Activated CD4-positive, alpha-beta memory T cell treated with anti-CD3 and anti-CD28 coated beads for 36 hours (primary cell): ENCODE measurements at regions of chr6 and their contacts with region 1.

Region 1: DNA sequence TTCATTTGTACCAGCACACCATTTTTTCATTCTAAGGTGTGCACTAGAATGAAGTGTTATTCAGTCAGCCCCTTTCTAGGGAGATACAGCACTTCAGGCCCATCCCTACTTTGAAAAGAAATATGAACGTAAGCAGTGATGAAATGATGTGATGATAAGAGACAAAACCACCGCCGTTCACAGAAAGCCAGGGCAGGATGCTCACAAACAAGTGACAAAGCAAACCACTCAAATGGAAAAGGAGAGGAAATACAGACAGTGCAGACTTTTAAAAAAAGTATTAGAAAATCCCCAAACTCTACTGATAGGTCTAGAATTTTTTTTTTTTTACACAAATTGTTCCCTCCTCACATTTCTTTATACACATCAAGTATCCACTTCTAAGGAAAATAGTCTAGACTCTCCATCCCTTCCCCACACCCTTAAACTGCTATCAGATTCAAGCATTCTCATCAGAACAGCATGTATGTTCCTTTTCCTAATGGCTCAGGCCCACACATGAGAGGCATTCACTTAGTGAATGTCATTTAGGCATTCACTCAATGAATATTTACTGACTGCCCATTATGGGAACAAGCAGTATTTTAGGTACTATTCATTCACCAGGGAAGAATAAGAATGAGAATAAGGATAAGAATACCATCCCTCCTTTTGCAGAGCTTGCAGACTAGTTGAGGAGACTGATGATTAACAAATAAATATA is 243.5 kb downstream of the GMPR start:
- DNase-seq: peak; percentile 76
- H3K4me3 Mint-ChIP-seq: peak overlapping the region; percentile 47
- H3K27ac Mint-ChIP-seq: peak overlapping the region; percentile 87
- H3K4me1 Mint-ChIP-seq: peaks cover 93% of the 10 kb centered on the region
- H3K27me3 Mint-ChIP-seq: no peaks in the 10 kb centered on the region

Region 2: DNA sequence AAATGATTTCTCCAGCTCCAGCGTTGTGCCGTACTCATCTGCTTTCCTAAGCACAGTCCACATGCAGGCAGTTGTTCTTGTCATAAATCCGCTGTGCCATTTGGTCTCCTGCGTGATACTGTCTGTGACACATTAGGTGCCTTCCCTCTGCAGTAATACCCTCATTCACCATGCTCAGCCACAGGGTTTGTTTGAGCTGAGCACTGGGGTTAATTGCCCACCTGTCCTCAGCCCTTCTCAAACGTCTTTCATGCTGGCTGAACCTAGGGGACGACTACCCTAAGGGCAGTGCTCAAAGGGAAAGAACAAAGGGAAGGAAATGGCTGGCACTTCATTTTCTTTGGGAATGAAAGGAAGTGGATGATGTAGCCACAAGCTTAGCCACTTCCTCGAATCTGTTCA is 417.2 kb before region 1 on chr6:
- CTCF ChIA-PET with region 1: no interaction called
- POLR2A ChIA-PET with region 1: no interaction called
- intact Hi-C with region 1: no loop called
- DNase-seq: no peak
- H3K4me3 Mint-ChIP-seq: no peak overlapping the region
- H3K27ac Mint-ChIP-seq: no peak overlapping the region
- H3K4me1 Mint-ChIP-seq: no peaks in the 10 kb centered on the region
- H3K27me3 Mint-ChIP-seq: peaks cover 9% of the 10 kb centered on the region

Region 3: DNA sequence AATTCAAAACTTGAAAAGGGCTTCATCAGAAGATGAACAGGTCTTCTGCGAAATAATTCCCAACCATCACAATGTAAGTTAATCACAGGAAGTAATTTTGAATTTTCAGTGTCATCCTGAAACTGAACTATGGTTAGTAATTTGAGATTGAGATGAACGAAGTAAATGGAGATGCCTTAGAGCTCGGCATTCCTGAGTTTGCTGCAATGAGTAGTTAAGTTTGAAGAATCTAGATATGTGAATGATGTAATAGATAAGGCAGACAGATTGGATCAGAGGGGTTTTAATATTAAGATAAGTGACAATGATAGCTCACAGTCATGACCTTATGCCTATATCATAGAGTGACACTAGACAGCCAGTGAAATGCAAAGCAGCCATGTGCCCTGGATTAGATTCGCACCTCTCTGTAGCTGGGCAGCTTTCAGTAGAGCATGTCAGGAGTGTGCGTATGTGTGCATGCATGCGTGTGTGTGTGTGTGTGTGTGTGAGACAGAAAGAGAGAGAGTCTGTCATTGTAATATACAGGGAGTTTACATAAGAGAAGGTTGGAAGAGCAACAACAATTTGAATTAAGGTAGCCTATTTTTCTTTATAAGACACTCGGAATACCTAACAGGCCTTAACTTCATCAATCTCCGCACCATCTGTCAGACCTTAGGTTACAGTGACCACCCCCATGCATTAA is 10.5 kb before region 1 on chr6:
- CTCF ChIA-PET with region 1: interaction called, 11 read pairs
- POLR2A ChIA-PET with region 1: interaction called, 15 read pairs
- intact Hi-C with region 1: loop called (anchors 1 kb)
- DNase-seq: no peak
- H3K4me3 Mint-ChIP-seq: no peak overlapping the region
- H3K27ac Mint-ChIP-seq: peak overlapping the region; percentile 69
- H3K4me1 Mint-ChIP-seq: peaks cover 88% of the 10 kb centered on the region
- H3K27me3 Mint-ChIP-seq: no peaks in the 10 kb centered on the region

Region 4: GRCh38 chr6:16494793-16495192 is 12.9 kb after region 1 on chr6:
- CTCF ChIA-PET with region 1: interaction called, 3 read pairs
- POLR2A ChIA-PET with region 1: no interaction called
- intact Hi-C with region 1: loop called (anchors 1 kb)
- DNase-seq: no peak
- H3K4me3 Mint-ChIP-seq: no peak overlapping the region
- H3K27ac Mint-ChIP-seq: no peak overlapping the region
- H3K4me1 Mint-ChIP-seq: peaks cover 73% of the 10 kb centered on the region
- H3K27me3 Mint-ChIP-seq: no peaks in the 10 kb centered on the region